Breast epithelium (tissue), 4 donors: ENCODE measurements at regions of chr6 and their contacts with region 1.

Region 1: DNA sequence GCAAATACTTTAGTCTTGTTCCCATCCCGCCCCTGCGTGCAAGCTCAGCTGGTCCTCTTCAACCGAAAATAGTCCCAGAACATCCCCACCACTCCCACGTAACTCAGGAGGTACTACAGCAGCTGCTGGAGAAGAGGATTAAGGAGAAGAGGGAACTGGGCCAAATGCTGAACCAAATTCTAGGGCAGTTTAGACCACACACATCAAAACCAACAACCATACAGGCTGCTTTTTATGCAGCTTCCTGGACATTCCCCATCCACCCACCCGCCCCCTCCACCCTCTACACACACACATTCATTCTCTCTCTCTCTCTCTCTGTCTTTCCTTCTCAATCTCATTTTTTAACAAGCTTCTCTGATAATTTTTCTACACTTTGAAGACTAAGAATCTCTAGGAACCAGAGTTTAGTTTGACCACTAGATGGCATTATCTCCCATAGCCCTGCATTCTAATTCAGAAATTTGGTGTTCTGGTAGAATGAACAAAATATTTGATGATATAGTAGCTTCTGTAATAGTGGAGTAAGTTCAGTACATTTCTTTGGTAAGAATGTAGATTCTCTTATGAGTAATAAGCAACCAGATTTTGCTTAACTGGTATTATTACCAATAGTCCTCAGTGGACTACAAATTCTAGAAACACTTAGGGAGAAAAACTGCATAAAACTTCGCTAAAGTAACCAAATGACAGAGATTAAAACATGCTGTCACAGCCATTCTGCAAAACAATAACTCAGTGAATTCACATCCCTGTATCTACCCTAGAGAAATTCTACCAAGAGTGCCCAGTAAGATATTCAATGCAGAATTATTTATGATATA is 52.1 kb upstream of the BEND6 start:
- DNase-seq: no peak
- H3K4me3 ChIP-seq: peak overlapping the region in 1 of 3 donors; percentile 29
- H3K27ac ChIP-seq: no peak overlapping the region
- H3K4me1 ChIP-seq: no peaks in the 10 kb centered on the region
- H3K27me3 ChIP-seq: no peaks in the 10 kb centered on the region
- CTCF ChIP-seq: peak in 2 of 3 donors; percentile 18 to 29
- POLR2A ChIP-seq: no peak

Region 2: DNA sequence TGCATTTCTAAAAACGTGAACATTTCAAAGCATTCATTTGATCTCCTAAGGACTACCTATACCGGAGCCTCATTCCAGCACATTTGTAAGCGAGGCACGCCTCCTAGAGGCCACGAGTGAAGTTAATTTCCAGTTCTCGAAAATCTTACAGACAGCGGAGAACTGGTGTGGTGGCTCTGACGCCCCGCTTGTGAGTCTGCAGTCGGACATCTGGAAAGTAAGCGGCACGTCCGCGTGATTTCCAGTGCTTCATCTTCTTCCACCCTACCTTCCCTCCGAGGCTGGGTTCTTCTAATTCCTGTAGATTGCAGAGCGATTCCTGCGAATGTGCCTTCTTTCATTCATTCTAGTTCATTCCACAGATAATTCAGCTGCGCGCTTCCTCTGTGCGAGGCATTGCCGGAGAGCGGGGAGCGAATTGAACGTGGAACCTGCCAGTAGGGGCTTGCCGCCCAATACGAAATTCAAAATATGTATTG is 413.8 kb after region 1 on chr6:
- intact Hi-C with region 1: loop called (anchors 5 kb)
- DNase-seq: peak; percentile 62 to 69
- H3K4me3 ChIP-seq: peak overlapping the region; percentile 59 to 74 (median 62)
- H3K27ac ChIP-seq: no peak overlapping the region
- H3K4me1 ChIP-seq: no peaks in the 10 kb centered on the region
- H3K27me3 ChIP-seq: no peaks in the 10 kb centered on the region
- CTCF ChIP-seq: peak; percentile 63 to 84 (median 76)
- POLR2A ChIP-seq: no peak